Psoas muscle (tissue), 8 donors: ENCODE measurements at regions of chr4 and their contacts with region 1.

Region 1: DNA sequence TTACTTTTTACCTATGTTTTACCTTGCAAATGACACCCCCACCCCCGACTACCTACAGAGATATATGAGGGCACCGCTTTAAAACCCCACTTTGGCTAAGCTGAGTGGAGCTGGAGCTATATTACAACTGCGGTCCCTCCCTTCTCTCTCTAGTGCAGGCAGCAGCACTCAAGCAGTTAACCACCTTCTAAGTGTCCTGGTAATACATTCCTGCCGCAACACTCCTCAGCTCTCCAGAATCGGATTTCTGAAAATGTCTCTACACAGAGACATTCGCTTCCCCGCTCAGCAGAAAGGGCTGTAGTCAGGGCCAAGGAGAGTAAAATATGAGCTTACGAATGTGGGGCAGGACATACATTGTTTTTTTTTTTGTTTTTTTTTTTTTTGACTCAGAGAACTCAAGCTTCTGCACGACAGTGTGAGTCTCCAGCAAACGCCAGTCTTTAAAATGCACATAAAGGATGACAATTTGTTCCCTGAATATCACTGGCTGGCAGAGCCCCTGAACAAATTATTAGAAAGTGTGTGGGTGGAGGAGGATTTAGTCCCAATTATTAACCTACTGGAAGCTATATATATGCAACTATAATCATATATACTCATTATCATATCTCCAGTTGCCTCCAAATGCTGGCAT is 287.0 kb upstream of the TET2 start:
- DNase-seq: no peak
- ATAC-seq: no peak
- H3K4me3 ChIP-seq: no peak overlapping the region
- H3K27ac ChIP-seq: no peak overlapping the region
- H3K4me1 ChIP-seq: no peaks in the 10 kb centered on the region
- H3K27me3 ChIP-seq: no peaks in the 10 kb centered on the region
- CTCF ChIP-seq: no peak

Region 2: DNA sequence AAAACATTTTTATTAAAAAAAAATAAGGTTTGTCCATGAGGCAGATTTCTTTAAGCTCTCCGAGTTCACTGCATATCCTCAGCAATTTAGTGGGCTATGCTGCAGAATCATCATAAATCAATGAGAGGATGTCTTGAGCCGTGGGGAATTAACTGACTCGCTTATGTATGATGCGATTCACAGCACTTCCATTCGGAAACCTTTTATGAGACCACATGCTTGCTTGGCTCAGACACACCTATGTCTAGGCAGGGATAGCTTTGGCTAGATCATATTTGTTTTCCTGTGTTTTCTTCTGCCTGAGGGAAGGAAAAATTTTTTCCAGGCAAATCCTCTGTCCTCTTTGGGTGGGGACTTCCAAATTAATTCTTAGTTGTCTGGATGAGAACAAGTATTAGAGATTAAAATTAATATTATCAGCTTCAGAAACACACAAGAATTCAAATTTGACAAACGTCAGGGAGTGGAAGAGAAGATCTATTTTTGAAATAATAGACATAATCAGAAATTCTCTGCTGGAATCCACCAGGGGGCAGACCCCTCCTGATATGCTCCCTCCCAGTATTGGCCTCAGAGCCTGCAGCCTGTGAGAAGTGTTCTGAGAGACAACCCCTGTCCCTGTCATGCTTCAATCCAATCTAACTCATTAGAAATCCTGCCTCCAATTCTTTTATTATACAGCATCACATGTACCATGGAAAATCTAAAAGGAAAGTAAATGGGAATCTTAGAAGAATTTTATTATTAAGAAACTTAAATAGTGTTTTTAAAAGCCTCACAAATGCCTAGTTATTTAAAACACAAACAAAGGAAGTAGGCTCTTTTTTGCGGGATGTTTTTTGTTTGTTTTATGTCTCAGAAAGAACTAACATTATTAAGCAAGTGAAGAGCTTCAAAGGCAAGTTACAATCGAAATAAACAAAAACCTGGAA is 794.8 kb before region 1 on chr4:
- intact Hi-C with region 1: loop called in 1 of 2 experiments (anchors 10 kb)
- DNase-seq: peak in 1 of 2 donors; percentile 43
- ATAC-seq: no peak
- H3K4me3 ChIP-seq: no peak overlapping the region
- H3K27ac ChIP-seq: no peak overlapping the region
- H3K4me1 ChIP-seq: no peaks in the 10 kb centered on the region
- H3K27me3 ChIP-seq: no peaks in the 10 kb centered on the region
- CTCF ChIP-seq: peak; percentile 37

Region 3: GRCh38 chr4:104693599-104694201 is 166.0 kb before region 1 on chr4:
- intact Hi-C with region 1: loop called in 1 of 2 experiments (anchors 10 kb)
- DNase-seq: no peak
- ATAC-seq: no peak
- H3K4me3 ChIP-seq: no peak overlapping the region
- H3K27ac ChIP-seq: no peak overlapping the region
- H3K4me1 ChIP-seq: no peaks in the 10 kb centered on the region
- H3K27me3 ChIP-seq: no peaks in the 10 kb centered on the region
- CTCF ChIP-seq: no peak